Activated T-helper 2 cell treated with anti-CD3 and anti-CD28 coated beads, Interferon-gamma antibody, Interleukin-2, Interleukin-4, amounts not matched to agents 10 μg/mL and 5 μg/mL and 100 μg/mL, durations not matched to agents 14 hours and 24 hours and 36 hours (primary cell): ENCODE measurements at regions of chr2 and their contacts with region 1.

Region 1: DNA sequence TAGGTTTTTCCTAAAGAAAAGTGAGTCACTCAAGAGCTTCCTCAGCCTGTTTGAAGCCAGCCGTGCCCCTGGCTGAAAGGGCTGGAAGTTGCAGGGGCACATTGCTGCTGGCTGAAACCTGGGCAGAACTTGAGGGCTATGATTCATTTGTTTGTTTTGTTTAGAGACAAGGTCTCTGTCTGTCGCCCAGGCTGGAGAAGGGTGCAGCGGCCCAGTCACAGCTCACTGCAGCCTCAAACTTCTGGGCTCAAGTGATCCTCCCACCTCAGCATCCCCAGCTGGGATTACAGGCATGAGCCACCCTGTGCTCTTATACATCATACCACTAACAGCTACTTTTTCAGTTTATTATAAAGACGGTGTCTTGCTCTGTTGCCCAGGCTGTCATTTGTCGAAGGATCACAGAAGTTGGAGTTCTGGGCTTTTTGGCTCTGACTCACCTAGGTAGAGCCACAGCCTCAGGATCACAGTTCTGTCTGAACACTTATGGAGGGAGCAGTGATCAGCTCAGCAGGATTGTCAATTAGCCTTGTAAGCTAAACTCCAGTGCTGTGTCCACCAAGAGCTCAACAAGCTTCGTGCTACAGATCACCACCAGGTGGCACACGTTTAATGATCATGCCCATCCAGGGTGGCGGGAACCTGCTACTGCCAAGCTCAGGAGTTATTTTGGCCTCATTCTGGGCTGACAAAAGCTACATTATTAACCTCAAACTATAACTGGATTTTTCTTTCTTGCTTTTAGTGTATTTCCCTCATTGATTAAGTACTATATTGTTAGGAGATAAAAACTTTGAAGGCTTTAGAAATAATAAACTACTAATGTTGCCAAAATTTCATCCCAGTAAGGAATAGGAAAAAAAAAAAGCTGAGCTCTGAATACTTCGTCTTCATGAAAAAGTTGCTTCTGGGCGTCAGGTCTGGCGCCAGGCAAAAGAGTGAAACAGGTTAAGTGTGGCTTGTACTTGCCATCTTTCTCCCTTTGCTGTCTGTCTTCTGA is 57.9 kb downstream of the ARHGEF33 start:
- DNase-seq: peak; percentile 60
- H3K4me3 Mint-ChIP-seq: no peak overlapping the region
- H3K27ac Mint-ChIP-seq: no peak overlapping the region
- H3K4me1 Mint-ChIP-seq: peaks cover 2% of the 10 kb centered on the region
- H3K27me3 Mint-ChIP-seq: peaks cover 4% of the 10 kb centered on the region

Region 2: DNA sequence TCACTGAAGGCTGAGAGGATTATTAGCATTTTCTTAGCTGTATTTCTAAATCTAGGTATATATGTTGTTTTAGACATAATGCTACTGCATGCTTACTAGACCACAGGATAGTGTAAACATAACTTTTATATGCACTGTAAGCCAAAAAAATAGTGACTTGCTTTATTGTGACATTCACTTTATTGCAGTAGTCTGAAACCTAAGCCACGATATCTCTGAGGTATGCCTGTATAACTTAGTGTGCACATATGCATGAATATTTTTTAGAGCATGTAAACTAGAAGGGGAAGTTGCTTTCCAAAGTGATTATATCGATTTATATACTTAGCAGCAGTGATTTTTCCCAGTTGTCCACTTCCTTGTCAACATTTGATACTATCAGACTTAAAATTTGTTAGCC is 91.5 kb after region 1 on chr2:
- intact Hi-C with region 1: loop called (anchors 5 kb)
- DNase-seq: no peak
- H3K4me3 Mint-ChIP-seq: no peak overlapping the region
- H3K27ac Mint-ChIP-seq: no peak overlapping the region
- H3K4me1 Mint-ChIP-seq: no peaks in the 10 kb centered on the region
- H3K27me3 Mint-ChIP-seq: no peaks in the 10 kb centered on the region

Region 3: GRCh38 chr2:39059366-39059952 is 111.9 kb after region 1 on chr2:
- intact Hi-C with region 1: loop called (anchors 5 kb)
- DNase-seq: no peak
- H3K4me3 Mint-ChIP-seq: no peak overlapping the region
- H3K27ac Mint-ChIP-seq: peak overlapping the region; percentile 58
- H3K4me1 Mint-ChIP-seq: peaks cover 20% of the 10 kb centered on the region
- H3K27me3 Mint-ChIP-seq: no peaks in the 10 kb centered on the region